ENCODE measurements at regions of chr15 and their contacts with region 1.

Region 1: DNA sequence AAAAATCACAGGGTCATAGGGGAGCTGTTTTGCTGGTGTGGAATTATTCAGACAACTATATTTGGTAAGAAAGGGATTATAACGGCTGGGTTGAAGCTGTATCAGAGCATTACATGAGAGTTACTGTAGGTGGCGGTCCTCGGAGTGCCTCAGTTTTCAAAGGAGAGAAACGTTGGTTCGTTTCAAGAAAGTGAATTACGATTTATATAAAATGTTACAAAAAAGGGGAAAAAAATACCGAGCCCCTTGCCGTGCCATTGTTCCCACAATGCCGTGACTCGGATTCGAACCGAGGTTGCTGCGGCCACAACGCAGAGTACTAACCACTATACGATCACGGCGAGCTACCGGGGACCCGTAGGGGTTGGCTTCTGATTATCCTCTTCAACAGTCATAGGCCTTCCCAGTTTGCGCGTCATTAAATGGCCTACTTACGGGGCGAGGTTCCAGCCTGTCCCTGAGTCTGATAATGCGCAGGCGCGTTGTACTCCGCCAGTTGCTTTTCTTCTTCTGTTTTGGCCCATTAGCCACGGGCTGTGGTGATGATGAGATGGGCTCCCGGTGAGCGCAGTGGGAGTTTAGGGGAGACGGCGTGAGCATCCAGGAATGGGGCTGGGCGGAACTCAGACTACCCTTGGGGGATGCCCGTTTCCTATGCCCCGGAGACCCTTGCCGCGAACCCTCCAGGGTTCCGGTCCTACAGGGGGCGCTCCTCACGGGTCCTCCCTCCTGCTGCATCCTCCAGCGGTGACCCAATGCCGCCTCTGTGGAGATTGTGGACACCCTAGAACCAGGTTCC is 10.8 kb upstream of the SHF start:
- DNase-seq: peak; percentile 74 to 99 (median 98)
- ATAC-seq: peak; percentile 62 to 70
- H3K4me3 Mint-ChIP-seq: no peak overlapping the region
- H3K27ac Mint-ChIP-seq: no peak overlapping the region
- H3K4me1 Mint-ChIP-seq: peaks cover 0 to 19% (median 15%) of the 10 kb centered on the region in 4 donors
- H3K27me3 Mint-ChIP-seq: peaks cover 0 to 4% (median 0%) of the 10 kb centered on the region in 5 donors

Region 2: GRCh38 chr15:45166834-45167630 is 31.5 kb before region 1 on chr15:
- POLR2A ChIA-PET with region 1: interaction called, 36 read pairs
- DNase-seq: peak; percentile 59 to 89 (median 76)
- ATAC-seq: peak; percentile 90 to 92
- H3K4me3 Mint-ChIP-seq: peak overlapping the region; percentile 64 to 87 (median 74)
- H3K27ac Mint-ChIP-seq: peak overlapping the region; percentile 60 to 95 (median 86)
- H3K4me1 Mint-ChIP-seq: peaks cover 5 to 22% (median 12%) of the 10 kb centered on the region in 4 donors
- H3K27me3 Mint-ChIP-seq: no peaks in the 10 kb centered on the region

Region 3: GRCh38 chr15:45179221-45179985 is 19.1 kb before region 1 on chr15:
- POLR2A ChIA-PET with region 1: interaction called, 88 read pairs
- DNase-seq: peak in 9 of 10 donors; percentile 22 to 79 (median 46)
- ATAC-seq: peak in 1 of 2 donors; percentile 72
- H3K4me3 Mint-ChIP-seq: no peak overlapping the region
- H3K27ac Mint-ChIP-seq: peak overlapping the region in 2 of 10 donors; percentile 33 to 83
- H3K4me1 Mint-ChIP-seq: peaks cover 15 to 26% (median 22%) of the 10 kb centered on the region in 4 donors
- H3K27me3 Mint-ChIP-seq: no peaks in the 10 kb centered on the region

Region 4: DNA sequence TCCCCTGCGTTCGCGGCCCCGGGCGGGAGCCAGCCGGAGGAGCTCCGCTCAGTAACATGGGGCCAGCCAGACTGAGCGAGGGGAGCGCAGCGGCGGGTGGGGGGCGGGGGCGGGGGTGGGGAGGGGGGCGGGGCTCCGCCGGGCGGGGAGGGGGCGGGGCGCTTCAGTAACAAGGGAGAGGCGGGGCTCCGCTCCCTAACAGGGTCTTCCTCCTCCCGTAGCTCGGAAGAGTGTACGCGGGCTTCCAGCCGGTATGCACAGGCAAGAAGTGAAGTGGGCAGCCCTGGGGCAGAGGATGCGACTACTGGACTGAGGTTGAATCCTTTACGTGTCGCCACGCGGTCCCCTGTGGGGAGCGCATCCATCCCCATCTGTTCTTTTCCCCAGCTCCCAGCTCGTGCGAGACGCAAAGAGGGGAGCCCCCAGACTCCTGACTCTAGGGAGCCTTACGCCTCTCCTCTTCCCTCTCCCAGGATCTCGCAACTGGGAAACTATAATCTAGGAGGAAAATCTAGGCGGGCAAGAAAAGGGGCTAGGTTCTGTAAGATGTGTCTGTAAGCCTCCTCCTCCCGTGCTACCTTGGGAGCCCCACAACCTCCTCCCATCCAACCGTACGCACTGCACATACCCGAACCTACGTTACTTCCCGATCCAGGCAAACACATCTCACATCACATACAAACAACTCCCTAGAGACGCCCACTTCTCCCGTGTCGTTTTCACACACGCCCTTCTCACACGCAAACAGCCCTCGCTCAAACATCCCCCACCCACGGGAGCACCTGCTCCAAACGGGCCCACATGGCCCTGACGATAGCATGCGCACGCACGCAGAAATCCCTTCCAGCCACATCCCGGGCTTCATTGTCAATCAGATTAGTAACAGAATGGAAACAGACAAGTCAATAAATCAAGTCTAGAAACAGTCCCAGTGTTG is 10.4 kb before region 1 on chr15 and contains the start of gene SHF:
- POLR2A ChIA-PET with region 1: interaction called, 88 read pairs
- DNase-seq: peak; percentile 50 to 81 (median 66)
- ATAC-seq: peak; percentile 73 to 77
- H3K4me3 Mint-ChIP-seq: peak within 1 kb of the TSS; percentile 85 to 99 (median 93)
- H3K27ac Mint-ChIP-seq: peak within 1 kb of the TSS; percentile 84 to 97 (median 94)
- H3K4me1 Mint-ChIP-seq: peaks cover 22 to 41% (median 30%) of the 10 kb centered on the region in 4 donors
- H3K27me3 Mint-ChIP-seq: peaks cover 0 to 4% (median 0%) of the 10 kb centered on the region in 5 donors
- polyA plus RNA-seq, gene SHF: 1.1 to 2.6 (median 1.4) TPM

Region 5: GRCh38 chr15:45279024-45279698 is 80.6 kb after region 1 on chr15:
- POLR2A ChIA-PET with region 1: interaction called, 17 read pairs
- DNase-seq: peak; percentile 93 to 99 (median 98)
- ATAC-seq: peak; percentile 99 to 100
- H3K4me3 Mint-ChIP-seq: peak overlapping the region; percentile 86 to 100 (median 96)
- H3K27ac Mint-ChIP-seq: peak overlapping the region; percentile 92 to 99 (median 96)
- H3K4me1 Mint-ChIP-seq: peaks cover 3 to 27% (median 21%) of the 10 kb centered on the region in 4 donors
- H3K27me3 Mint-ChIP-seq: peaks cover 0 to 1% (median 0%) of the 10 kb centered on the region in 5 donors

Region 6: GRCh38 chr15:45338417-45338816 is 139.9 kb after region 1 on chr15:
- POLR2A ChIA-PET with region 1: no interaction called
- DNase-seq: peak in 2 of 10 donors; percentile 22 to 23
- ATAC-seq: peak in 1 of 2 donors; percentile 82
- H3K4me3 Mint-ChIP-seq: peak overlapping the region in 2 of 10 donors; percentile 1 to 34
- H3K27ac Mint-ChIP-seq: peak overlapping the region in 1 of 10 donors; percentile 65
- H3K4me1 Mint-ChIP-seq: peaks cover 3 to 16% (median 13%) of the 10 kb centered on the region in 4 donors
- H3K27me3 Mint-ChIP-seq: peaks cover 0 to 2% (median 0%) of the 10 kb centered on the region in 5 donors

Region 7: DNA sequence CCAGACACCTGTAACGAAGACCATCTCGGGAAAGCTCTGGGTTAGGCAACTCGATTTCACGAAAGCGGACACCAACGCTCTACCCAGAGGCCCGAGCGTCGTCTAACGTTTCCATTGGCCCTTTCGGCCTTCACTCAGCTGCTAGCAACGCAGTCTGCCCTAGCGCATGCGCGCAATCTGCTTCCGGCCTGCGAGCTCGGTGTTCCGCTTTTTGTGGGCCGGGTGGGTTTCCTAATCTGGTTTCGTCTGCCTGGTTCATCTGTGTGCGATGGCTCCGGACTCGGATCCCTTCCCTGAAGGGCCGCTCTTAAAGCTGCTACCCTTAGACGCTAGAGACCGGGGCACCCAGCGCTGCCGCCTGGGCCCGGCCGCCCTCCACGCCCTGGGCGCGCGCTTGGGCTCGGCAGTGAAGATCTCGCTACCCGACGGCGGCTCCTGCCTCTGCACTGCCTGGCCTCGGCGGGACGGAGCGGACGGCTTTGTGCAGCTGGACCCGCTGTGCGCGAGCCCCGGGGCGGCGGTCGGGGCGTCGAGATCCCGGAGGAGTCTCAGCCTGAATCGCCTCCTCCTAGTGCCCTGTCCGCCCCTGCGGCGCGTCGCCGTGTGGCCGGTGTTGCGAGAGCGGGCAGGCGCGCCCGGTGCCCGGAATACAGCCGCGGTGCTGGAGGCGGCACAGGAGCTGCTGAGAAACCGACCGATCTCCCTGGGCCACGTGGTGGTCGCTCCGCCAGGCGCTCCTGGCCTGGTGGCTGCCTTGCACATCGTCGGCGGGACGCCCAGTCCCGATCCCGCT is 203.8 kb after region 1 on chr15:
- POLR2A ChIA-PET with region 1: interaction called, 50 read pairs
- DNase-seq: peak; percentile 90 to 98 (median 96)
- ATAC-seq: peak; percentile 95
- H3K4me3 Mint-ChIP-seq: peak overlapping the region; percentile 92 to 97 (median 96)
- H3K27ac Mint-ChIP-seq: peak overlapping the region; percentile 82 to 99 (median 97)
- H3K4me1 Mint-ChIP-seq: peaks cover 9 to 43% (median 35%) of the 10 kb centered on the region in 4 donors
- H3K27me3 Mint-ChIP-seq: peaks cover 0 to 1% (median 0%) of the 10 kb centered on the region in 5 donors